ENCODE measurements at regions of chr16 and their contacts with region 1.

Region 1: GRCh38 chr16:31507929-31508705 is at the start of gene RUSF1:
- DNase-seq: peak; percentile 33
- ATAC-seq: peak; percentile 89
- H3K4me3 ChIP-seq: peak within 1 kb of the TSS; percentile 90
- H3K27ac ChIP-seq: peak within 1 kb of the TSS; percentile 92
- H3K4me1 ChIP-seq: peaks cover 14% of the 10 kb centered on the region
- H3K27me3 ChIP-seq: no peaks in the 10 kb centered on the region
- CTCF ChIP-seq: no peak
- EP300 ChIP-seq: no peak
- POLR2A ChIP-seq: peak; percentile 95
- RAD21 ChIP-seq: no peak
- polyA plus RNA-seq, gene RUSF1: 0.20 to 0.26 TPM

Region 2: DNA sequence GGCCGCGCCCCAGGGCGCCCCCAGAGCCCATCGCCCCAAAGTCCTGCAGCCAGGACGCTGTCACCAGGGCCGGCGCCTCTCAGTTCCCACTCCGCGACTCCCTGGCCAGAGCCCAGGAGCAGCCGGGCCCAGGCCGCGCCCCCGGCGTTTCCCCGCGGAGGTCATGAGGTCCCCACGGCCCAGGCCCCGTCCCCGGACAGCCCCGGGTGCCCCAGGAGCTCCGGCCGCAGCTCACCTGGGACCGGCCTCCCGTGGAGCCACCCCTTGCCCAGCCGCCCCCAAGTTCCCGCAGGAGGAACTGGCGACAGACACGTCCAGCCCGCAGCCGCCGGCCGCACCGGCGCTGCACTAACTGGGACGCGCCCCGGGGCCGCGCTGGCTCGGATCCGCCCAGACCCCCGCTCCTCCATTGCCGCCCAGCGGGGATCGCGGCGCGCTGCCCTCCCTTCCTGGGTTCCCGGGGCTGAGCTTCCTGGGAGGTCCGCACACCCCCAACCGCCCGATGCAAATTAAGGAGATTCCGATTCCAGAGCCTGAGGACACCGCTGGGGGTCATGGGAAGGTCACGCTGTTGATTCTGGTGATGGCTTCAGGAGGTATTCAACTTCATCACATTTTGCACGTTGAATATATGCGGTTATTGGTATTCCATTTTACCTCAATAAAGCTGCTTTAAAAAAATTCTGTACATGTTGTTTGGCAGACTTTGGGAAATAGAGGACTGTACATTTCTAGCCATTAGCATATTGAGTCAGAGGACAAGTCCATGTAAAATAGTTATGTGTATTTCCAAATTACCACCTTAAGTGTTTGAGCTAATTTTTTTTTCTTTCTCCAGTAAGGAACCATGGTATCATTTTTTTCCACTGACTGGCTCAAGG is 29.5 kb after region 1 on chr16:
- CTCF ChIA-PET with region 1: no interaction called
- POLR2A ChIA-PET with region 1: no interaction called
- RAD21 ChIA-PET with region 1: no interaction called
- SMC1A ChIA-PET with region 1: no interaction called
- in situ Hi-C with region 1: no loop called
- intact Hi-C with region 1: no loop called
- DNase-seq: no peak
- ATAC-seq: no peak
- H3K4me3 ChIP-seq: no peak overlapping the region
- H3K27ac ChIP-seq: no peak overlapping the region
- H3K4me1 ChIP-seq: no peaks in the 10 kb centered on the region
- H3K27me3 ChIP-seq: no peaks in the 10 kb centered on the region
- CTCF ChIP-seq: no peak
- EP300 ChIP-seq: no peak
- POLR2A ChIP-seq: no peak
- RAD21 ChIP-seq: no peak

Region 3: DNA sequence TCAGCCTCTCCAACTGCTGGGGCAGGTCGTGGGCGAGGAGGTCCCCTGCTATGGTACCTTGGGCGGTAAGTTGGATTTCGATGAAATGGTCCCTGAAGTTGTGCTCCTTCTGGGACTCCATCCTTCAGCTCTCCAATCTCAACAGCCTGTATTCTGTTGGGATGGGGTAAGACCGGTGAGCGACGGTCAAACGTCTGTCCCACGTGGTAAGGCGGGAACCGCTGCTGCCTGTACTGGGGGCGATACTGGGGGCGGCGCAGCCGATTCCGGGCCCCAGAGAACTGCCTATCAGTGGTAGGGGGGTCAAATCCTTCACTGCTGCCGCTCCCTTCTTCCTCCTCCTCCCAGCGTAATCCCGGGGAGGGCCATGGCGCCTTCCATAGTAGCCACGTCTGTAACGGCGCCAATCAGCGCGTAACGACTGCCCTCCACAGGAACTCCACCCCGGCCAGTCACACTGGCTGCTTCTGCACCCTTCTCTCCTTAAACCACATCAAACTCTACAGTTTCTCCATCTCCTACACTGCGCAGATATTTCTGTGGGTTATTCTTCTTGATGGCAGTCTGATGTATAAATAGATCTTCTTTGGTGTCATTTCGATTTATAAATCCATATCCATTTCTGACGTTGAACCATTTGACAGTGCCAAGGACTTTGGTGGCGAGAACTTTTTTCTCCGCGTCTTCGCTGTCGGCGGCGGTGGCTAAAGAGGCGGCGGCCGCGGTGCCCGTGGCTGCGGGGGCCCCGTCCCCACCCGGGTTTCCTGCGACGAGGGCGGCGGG is 60.7 kb after region 1 on chr16:
- CTCF ChIA-PET with region 1: no interaction called
- POLR2A ChIA-PET with region 1: no interaction called
- RAD21 ChIA-PET with region 1: no interaction called
- SMC1A ChIA-PET with region 1: no interaction called
- in situ Hi-C with region 1: no loop called
- intact Hi-C with region 1: loop called (anchors 10 kb)
- DNase-seq: no peak
- ATAC-seq: no peak
- H3K4me3 ChIP-seq: no peak overlapping the region
- H3K27ac ChIP-seq: no peak overlapping the region
- H3K4me1 ChIP-seq: no peaks in the 10 kb centered on the region
- H3K27me3 ChIP-seq: no peaks in the 10 kb centered on the region
- CTCF ChIP-seq: no peak
- EP300 ChIP-seq: no peak
- POLR2A ChIP-seq: no peak
- RAD21 ChIP-seq: no peak

Region 4: GRCh38 chr16:31713071-31713944 is 205.2 kb after region 1 on chr16:
- CTCF ChIA-PET with region 1: interaction called, 5 read pairs
- POLR2A ChIA-PET with region 1: no interaction called
- RAD21 ChIA-PET with region 1: no interaction called
- SMC1A ChIA-PET with region 1: no interaction called
- in situ Hi-C with region 1: no loop called
- intact Hi-C with region 1: loop called (anchors 5 kb)
- DNase-seq: peak; percentile 79
- ATAC-seq: peak; percentile 94
- H3K4me3 ChIP-seq: peak overlapping the region; percentile 75
- H3K27ac ChIP-seq: peak overlapping the region; percentile 96
- H3K4me1 ChIP-seq: peaks cover 6% of the 10 kb centered on the region
- H3K27me3 ChIP-seq: no peaks in the 10 kb centered on the region
- CTCF ChIP-seq: no peak
- EP300 ChIP-seq: no peak
- POLR2A ChIP-seq: peak; percentile 97
- RAD21 ChIP-seq: no peak

Region 5: DNA sequence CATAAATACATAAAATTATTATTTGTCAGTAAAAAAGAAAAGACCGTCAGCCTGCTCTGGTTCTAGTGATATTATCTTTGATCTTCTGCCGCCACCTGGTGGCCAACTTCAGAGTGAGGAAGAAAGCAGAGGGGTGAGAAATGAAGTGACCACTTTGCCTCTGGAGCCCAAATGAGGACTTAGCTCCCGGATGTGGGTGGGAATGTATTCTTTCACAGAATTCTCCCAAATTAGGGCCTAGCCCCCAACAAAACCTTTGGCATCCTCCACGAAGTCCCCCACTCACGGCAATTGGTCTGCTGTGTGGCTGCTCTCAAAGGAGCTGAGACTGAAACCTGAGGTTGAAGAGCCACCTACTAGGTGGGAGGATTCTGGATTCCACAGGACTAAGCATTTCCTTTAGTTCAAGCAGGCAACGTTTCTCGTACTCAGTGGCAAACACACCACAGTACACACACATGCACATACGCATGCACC is 360.6 kb after region 1 on chr16:
- CTCF ChIA-PET with region 1: no interaction called
- POLR2A ChIA-PET with region 1: interaction called, 6 read pairs
- RAD21 ChIA-PET with region 1: no interaction called
- SMC1A ChIA-PET with region 1: interaction called, 4 read pairs
- in situ Hi-C with region 1: no loop called
- intact Hi-C with region 1: loop called (anchors 1 kb)
- DNase-seq: no peak
- ATAC-seq: peak; percentile 78
- H3K4me3 ChIP-seq: peak overlapping the region; percentile 28; the same call in 1 of the 2 replicates
- H3K27ac ChIP-seq: no peak overlapping the region
- H3K4me1 ChIP-seq: peaks cover 24% of the 10 kb centered on the region
- H3K27me3 ChIP-seq: no peaks in the 10 kb centered on the region
- CTCF ChIP-seq: peak; percentile 59 to 71 (median 70)
- EP300 ChIP-seq: no peak
- POLR2A ChIP-seq: no peak
- RAD21 ChIP-seq: peak; percentile 87

Measured in GM12878 (cell line).